MCF 10A (cell line): ENCODE measurements at regions of chr6 and their contacts with region 1.

Region 1: GRCh38 chr6:21593412-21593926 is at the start of gene SOX4:
- DNase-seq: peak; percentile 97
- H3K4me3 Mint-ChIP-seq: no peak within 1 kb of the TSS
- H3K27ac Mint-ChIP-seq: no peak within 1 kb of the TSS
- H3K4me1 Mint-ChIP-seq: no peaks in the 10 kb centered on the region
- H3K27me3 Mint-ChIP-seq: no peaks in the 10 kb centered on the region
- CTCF ChIP-seq: no peak
- total RNA-seq, gene SOX4: 12.8 and 12.9 TPM in 2 replicates

Region 2: GRCh38 chr6:21022343-21023107 is 570.9 kb before region 1 on chr6:
- CTCF ChIA-PET with region 1: interaction called, 4 read pairs
- POLR2A ChIA-PET with region 1: interaction called, 3 read pairs
- intact Hi-C with region 1: loop called (anchors 2 kb)
- DNase-seq: peak; percentile 69
- H3K4me3 Mint-ChIP-seq: peak overlapping the region; percentile 43
- H3K27ac Mint-ChIP-seq: peak overlapping the region; percentile 96
- H3K4me1 Mint-ChIP-seq: peaks cover 32% of the 10 kb centered on the region
- H3K27me3 Mint-ChIP-seq: no peaks in the 10 kb centered on the region
- CTCF ChIP-seq: no peak

Region 3: GRCh38 chr6:21731411-21732031 is 138.1 kb after region 1 on chr6:
- CTCF ChIA-PET with region 1: no interaction called
- POLR2A ChIA-PET with region 1: interaction called, 12 read pairs
- intact Hi-C with region 1: no loop called
- DNase-seq: peak; percentile 92
- H3K4me3 Mint-ChIP-seq: peak overlapping the region; percentile 45
- H3K27ac Mint-ChIP-seq: peak overlapping the region; percentile 80
- H3K4me1 Mint-ChIP-seq: peaks cover 14% of the 10 kb centered on the region
- H3K27me3 Mint-ChIP-seq: no peaks in the 10 kb centered on the region
- CTCF ChIP-seq: no peak

Region 4: DNA sequence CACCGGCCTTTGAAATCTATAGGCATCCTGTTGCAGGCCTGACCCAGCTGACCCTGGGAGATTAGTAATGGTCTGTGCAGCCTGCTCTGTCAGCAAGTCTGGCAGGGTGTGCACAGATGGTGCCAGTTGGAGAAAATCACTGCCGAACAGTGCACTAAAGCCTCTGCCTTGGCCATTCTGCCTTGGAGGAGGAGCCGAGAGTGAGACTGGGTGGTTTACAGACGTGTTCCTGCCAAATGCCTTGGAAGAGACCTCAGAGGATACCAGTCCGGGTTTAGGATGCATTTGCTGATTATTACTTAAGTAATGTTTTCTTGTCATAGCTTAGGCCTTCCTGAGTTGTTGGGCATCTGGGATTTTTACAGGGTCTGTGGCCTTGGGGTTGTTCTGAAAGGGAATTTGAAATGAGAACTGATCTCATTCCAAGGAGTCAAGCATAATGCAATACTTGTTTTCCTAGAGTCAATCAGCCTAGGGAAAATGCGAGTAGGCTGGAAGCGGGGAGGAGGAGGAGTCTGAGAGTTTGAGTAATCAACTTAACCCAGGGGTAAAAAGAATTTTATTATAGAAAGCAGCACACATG is 292.2 kb after region 1 on chr6:
- CTCF ChIA-PET with region 1: interaction called, 5 read pairs
- POLR2A ChIA-PET with region 1: interaction called, 14 read pairs
- intact Hi-C with region 1: no loop called
- DNase-seq: peak; percentile 71
- H3K4me3 Mint-ChIP-seq: no peak overlapping the region
- H3K27ac Mint-ChIP-seq: no peak overlapping the region
- H3K4me1 Mint-ChIP-seq: peaks cover 8% of the 10 kb centered on the region
- H3K27me3 Mint-ChIP-seq: no peaks in the 10 kb centered on the region
- CTCF ChIP-seq: no peak

Region 5: DNA sequence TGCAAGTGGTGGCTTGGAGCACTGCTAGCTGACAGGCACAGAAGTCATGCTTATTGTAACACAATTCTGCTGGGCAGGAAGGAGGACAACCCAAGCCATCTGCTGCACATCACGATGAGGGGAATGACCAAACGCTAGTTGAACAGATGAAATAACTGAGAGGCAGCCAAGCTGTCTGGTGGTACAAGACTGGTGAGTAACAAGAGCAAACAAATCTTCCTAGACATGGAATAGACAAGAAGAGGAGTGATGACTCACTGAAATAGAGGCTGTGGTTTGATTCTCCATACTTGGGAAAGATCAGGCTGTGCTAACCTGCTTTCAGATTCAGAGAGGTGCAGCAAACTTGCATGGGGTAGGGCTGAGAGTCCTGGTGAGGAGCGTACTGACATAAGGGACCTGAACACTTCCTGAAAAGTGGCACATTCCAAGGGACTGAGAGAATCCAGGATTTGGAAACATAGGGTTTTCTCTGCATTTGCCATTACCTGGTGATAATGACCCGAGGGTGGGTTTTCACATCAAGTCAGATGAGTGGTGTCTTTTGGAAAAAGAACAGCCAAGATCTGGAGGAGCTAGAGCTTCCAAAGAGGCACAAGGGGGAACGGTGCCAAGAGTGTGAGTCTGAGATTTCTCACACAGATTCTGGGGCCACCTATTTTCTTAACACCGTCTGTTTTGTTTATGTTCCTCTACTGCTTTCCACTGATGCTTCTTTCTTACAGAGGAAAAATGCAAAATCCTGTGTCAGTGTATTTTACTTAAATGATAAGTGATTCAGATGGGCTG is 643.4 kb after region 1 on chr6:
- CTCF ChIA-PET with region 1: no interaction called
- POLR2A ChIA-PET with region 1: interaction called, 3 read pairs
- intact Hi-C with region 1: loop called (anchors 2 kb)
- DNase-seq: peak; percentile 97
- H3K4me3 Mint-ChIP-seq: peak overlapping the region; percentile 66
- H3K27ac Mint-ChIP-seq: peak overlapping the region; percentile 94
- H3K4me1 Mint-ChIP-seq: peaks cover 28% of the 10 kb centered on the region
- H3K27me3 Mint-ChIP-seq: no peaks in the 10 kb centered on the region
- CTCF ChIP-seq: no peak

Region 6: DNA sequence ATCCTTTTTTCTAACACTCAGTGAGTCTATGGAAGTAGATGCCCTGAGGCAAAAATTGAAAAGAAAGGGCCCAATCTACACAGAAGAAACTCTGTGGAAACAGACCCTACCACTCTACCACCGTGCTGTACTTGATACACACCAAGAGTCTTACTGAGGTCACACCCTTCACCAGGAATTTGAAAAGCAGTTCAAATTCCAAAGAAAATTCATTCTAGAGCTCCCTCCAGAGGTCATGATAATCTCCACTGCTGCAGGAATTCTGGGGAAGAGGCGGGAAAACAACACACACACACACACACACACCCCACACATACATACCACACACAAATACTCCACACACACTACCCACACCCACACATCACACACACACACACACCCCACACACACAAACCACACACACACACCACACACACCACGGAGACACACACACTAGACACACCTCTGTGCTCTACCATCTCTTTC is 1312.7 kb after region 1 on chr6:
- CTCF ChIA-PET with region 1: no interaction called
- POLR2A ChIA-PET with region 1: no interaction called
- intact Hi-C with region 1: loop called (anchors 2 kb)
- DNase-seq: peak; percentile 40
- H3K4me3 Mint-ChIP-seq: no peak overlapping the region
- H3K27ac Mint-ChIP-seq: no peak overlapping the region
- H3K4me1 Mint-ChIP-seq: peaks cover 6% of the 10 kb centered on the region
- H3K27me3 Mint-ChIP-seq: no peaks in the 10 kb centered on the region
- CTCF ChIP-seq: peak; percentile 25